IMR-90 (cell line): ENCODE measurements at regions of chr6 and their contacts with region 1.

Region 1: GRCh38 chr6:37919417-37920157 is 100.1 kb downstream of the ZFAND3 start:
- DNase-seq: peak; percentile 92
- ATAC-seq: peak; percentile 70
- H3K4me3 ChIP-seq: no peak overlapping the region
- H3K27ac ChIP-seq: peak overlapping the region; percentile 79; the same call in 1 of the 2 replicates
- H3K4me1 ChIP-seq: peaks cover 9% of the 10 kb centered on the region
- H3K27me3 ChIP-seq: no peaks in the 10 kb centered on the region
- CTCF ChIP-seq: no peak
- POLR2A ChIP-seq: no peak
- RAD21 ChIP-seq: no peak

Region 2: GRCh38 chr6:37432916-37433656 is 486.5 kb before region 1 on chr6 and contains the start of gene CMTR1:
- CTCF ChIA-PET with region 1: no interaction called
- POLR2A ChIA-PET with region 1: interaction called, 11 read pairs
- dilution Hi-C with region 1: no loop called
- in situ Hi-C with region 1: no loop called
- intact Hi-C with region 1: no loop called
- DNase-seq: peak; percentile 86
- ATAC-seq: peak; percentile 99
- H3K4me3 ChIP-seq: peak within 1 kb of the TSS; percentile 70
- H3K27ac ChIP-seq: peak within 1 kb of the TSS; percentile 60
- H3K4me1 ChIP-seq: peaks cover 2% of the 10 kb centered on the region; the same call in 1 of the 2 replicates
- H3K27me3 ChIP-seq: peaks cover 1% of the 10 kb centered on the region; the same call in 1 of the 2 replicates
- CTCF ChIP-seq: peak; percentile 8; the same call in 1 of the 2 replicates
- POLR2A ChIP-seq: peak; percentile 77
- RAD21 ChIP-seq: peak; percentile 23
- total RNA-seq, gene CMTR1: 30.1 and 32.5 TPM in 2 replicates

Region 3: GRCh38 chr6:37602346-37602745 is 317.2 kb before region 1 on chr6:
- CTCF ChIA-PET with region 1: no interaction called
- POLR2A ChIA-PET with region 1: no interaction called
- dilution Hi-C with region 1: no loop called
- in situ Hi-C with region 1: no loop called
- intact Hi-C with region 1: no loop called
- DNase-seq: peak; percentile 63
- ATAC-seq: peak; percentile 90
- H3K4me3 ChIP-seq: no peak overlapping the region
- H3K27ac ChIP-seq: no peak overlapping the region
- H3K4me1 ChIP-seq: peaks cover 4% of the 10 kb centered on the region
- H3K27me3 ChIP-seq: peaks cover 39% of the 10 kb centered on the region
- CTCF ChIP-seq: no peak
- POLR2A ChIP-seq: no peak
- RAD21 ChIP-seq: no peak

Region 4: GRCh38 chr6:37906121-37906520 is 13.5 kb before region 1 on chr6:
- CTCF ChIA-PET with region 1: interaction called, 3 read pairs
- POLR2A ChIA-PET with region 1: interaction called, 3 read pairs
- dilution Hi-C with region 1: no loop called
- in situ Hi-C with region 1: no loop called
- intact Hi-C with region 1: loop called (anchors 1 kb)
- DNase-seq: peak; percentile 28
- ATAC-seq: peak; percentile 67
- H3K4me3 ChIP-seq: no peak overlapping the region
- H3K27ac ChIP-seq: no peak overlapping the region
- H3K4me1 ChIP-seq: peaks cover 2% of the 10 kb centered on the region
- H3K27me3 ChIP-seq: no peaks in the 10 kb centered on the region
- CTCF ChIP-seq: no peak
- POLR2A ChIP-seq: no peak
- RAD21 ChIP-seq: no peak

Region 5: GRCh38 chr6:37990762-37991525 is 71.4 kb after region 1 on chr6:
- CTCF ChIA-PET with region 1: no interaction called
- POLR2A ChIA-PET with region 1: no interaction called
- dilution Hi-C with region 1: no loop called
- in situ Hi-C with region 1: no loop called
- intact Hi-C with region 1: no loop called
- DNase-seq: peak; percentile 88
- ATAC-seq: peak; percentile 74
- H3K4me3 ChIP-seq: no peak overlapping the region
- H3K27ac ChIP-seq: no peak overlapping the region
- H3K4me1 ChIP-seq: peaks cover 19% of the 10 kb centered on the region
- H3K27me3 ChIP-seq: no peaks in the 10 kb centered on the region
- CTCF ChIP-seq: no peak
- POLR2A ChIP-seq: no peak
- RAD21 ChIP-seq: no peak